A673 (cell line): ENCODE measurements at regions of chr1 and their contacts with region 1.

Region 1: GRCh38 chr1:11985851-11986250 is 5.6 kb downstream of the MFN2 start:
- DNase-seq: peak; percentile 98
- H3K4me3 ChIP-seq: peak overlapping the region; percentile 22
- H3K27ac ChIP-seq: peak overlapping the region; percentile 96
- H3K4me1 ChIP-seq: peaks cover 51% of the 10 kb centered on the region
- H3K27me3 ChIP-seq: no peaks in the 10 kb centered on the region
- CTCF ChIP-seq: no peak

Region 2: GRCh38 chr1:11907275-11908094 is 78.4 kb before region 1 on chr1:
- CTCF ChIA-PET with region 1: no interaction called
- POLR2A ChIA-PET with region 1: interaction called, 11 read pairs
- intact Hi-C with region 1: loop called (anchors 1 kb)
- DNase-seq: peak; percentile 98
- H3K4me3 ChIP-seq: no peak overlapping the region
- H3K27ac ChIP-seq: peak overlapping the region; percentile 99
- H3K4me1 ChIP-seq: peaks cover 4% of the 10 kb centered on the region
- H3K27me3 ChIP-seq: no peaks in the 10 kb centered on the region
- CTCF ChIP-seq: peak; percentile 98

Region 3: DNA sequence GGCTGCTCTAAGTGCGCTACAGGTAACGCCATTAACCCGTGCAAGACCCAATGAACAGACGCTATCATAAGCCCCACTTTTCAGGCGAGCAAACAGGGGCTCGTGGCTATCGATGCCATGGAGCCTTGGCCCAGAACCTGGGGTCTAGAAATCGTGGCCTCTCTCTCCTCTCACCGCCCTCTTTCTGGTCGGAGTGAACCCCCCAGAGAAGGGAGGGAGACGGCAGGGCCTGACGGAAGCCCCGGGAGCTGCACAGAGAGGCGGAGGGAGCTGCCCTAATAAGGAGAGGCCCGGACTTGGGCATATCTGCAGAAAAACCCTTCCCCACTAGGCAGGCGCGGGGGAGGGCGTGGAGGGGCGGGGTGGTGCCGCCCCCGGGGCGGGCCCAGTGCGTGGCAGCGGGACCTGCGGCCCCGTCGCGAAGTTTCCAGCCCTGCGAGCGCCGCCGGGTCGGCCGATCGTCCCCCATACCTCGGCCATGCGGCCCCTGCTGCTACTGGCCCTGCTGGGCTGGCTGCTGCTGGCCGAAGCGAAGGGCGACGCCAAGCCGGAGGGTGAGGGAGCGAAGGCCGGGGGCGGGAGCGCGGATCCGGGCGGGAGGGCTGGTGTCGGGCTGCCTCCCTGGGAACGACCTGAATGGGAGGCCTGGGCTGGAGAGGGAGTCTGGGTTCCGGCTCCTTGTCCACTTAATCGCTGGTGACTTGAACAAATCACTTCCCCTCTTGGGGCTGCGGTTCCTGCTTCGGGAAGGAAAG is 51.4 kb before region 1 on chr1 and contains the start of gene PLOD1:
- CTCF ChIA-PET with region 1: no interaction called
- POLR2A ChIA-PET with region 1: no interaction called
- intact Hi-C with region 1: loop called (anchors 5 kb)
- DNase-seq: peak; percentile 92
- H3K4me3 ChIP-seq: peak within 1 kb of the TSS; percentile 58
- H3K27ac ChIP-seq: peak within 1 kb of the TSS; percentile 85
- H3K4me1 ChIP-seq: peaks cover 23% of the 10 kb centered on the region
- H3K27me3 ChIP-seq: no peaks in the 10 kb centered on the region
- CTCF ChIP-seq: no peak
- total RNA-seq, gene PLOD1: 94.8 and 103 TPM in 2 replicates

Region 4: GRCh38 chr1:11948822-11949458 is 36.9 kb before region 1 on chr1:
- CTCF ChIA-PET with region 1: no interaction called
- POLR2A ChIA-PET with region 1: no interaction called
- intact Hi-C with region 1: no loop called
- DNase-seq: peak; percentile 54
- H3K4me3 ChIP-seq: no peak overlapping the region
- H3K27ac ChIP-seq: no peak overlapping the region
- H3K4me1 ChIP-seq: peaks cover 13% of the 10 kb centered on the region
- H3K27me3 ChIP-seq: no peaks in the 10 kb centered on the region
- CTCF ChIP-seq: no peak

Region 5: DNA sequence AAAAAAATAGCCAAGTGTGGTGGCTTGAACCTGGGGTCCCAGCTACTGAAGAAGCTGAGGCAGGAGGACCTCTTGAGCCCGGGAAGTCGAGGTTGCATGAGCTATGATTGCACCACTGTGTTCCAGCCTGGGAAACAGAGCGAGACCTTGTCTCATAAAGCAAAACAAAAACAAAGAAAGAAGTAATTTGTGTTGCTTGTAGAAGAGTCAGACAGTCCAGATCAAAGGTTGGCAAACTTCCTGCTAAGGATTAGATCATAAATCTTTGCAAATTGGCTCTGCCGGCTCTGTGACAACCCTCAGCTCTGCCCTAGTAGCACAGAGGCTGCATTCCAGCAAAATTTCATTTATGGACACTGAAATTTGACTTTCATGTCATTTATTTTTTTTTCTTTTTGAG is 24.6 kb before region 1 on chr1:
- CTCF ChIA-PET with region 1: no interaction called
- POLR2A ChIA-PET with region 1: no interaction called
- intact Hi-C with region 1: no loop called
- DNase-seq: peak; percentile 48
- H3K4me3 ChIP-seq: no peak overlapping the region
- H3K27ac ChIP-seq: peak overlapping the region; percentile 23
- H3K4me1 ChIP-seq: peaks cover 3% of the 10 kb centered on the region
- H3K27me3 ChIP-seq: no peaks in the 10 kb centered on the region
- CTCF ChIP-seq: no peak